ENCODE measurements at regions of chr11 and their contacts with region 1.

Region 1: GRCh38 chr11:65314501-65315203 is at the start of gene CDC42EP2:
- DNase-seq: peak; percentile 74
- H3K4me3 ChIP-seq: peak within 1 kb of the TSS; percentile 74
- H3K27ac ChIP-seq: no peak within 1 kb of the TSS
- H3K4me1 ChIP-seq: peaks cover 9% of the 10 kb centered on the region
- CTCF ChIP-seq: no peak
- total RNA-seq, gene CDC42EP2: not detected in 2 replicates

Region 2: GRCh38 chr11:65117216-65118096 is 197.2 kb before region 1 on chr11 and contains the start of gene ZNHIT2:
- CTCF ChIA-PET with region 1: no interaction called
- POLR2A ChIA-PET with region 1: no interaction called
- intact Hi-C with region 1: no loop called
- DNase-seq: peak; percentile 100
- H3K4me3 ChIP-seq: peak within 1 kb of the TSS; percentile 81
- H3K27ac ChIP-seq: peak within 1 kb of the TSS; percentile 78
- H3K4me1 ChIP-seq: peaks cover 62% of the 10 kb centered on the region
- CTCF ChIP-seq: peak; percentile 92
- total RNA-seq, gene ZNHIT2: 29.9 and 32.4 TPM in 2 replicates

Region 3: GRCh38 chr11:65225279-65226102 is 89.2 kb before region 1 on chr11:
- CTCF ChIA-PET with region 1: no interaction called
- POLR2A ChIA-PET with region 1: no interaction called
- intact Hi-C with region 1: loop called (anchors 10 kb)
- DNase-seq: peak; percentile 67
- H3K4me3 ChIP-seq: peak overlapping the region; percentile 63
- H3K27ac ChIP-seq: no peak overlapping the region
- H3K4me1 ChIP-seq: peaks cover 16% of the 10 kb centered on the region
- CTCF ChIP-seq: peak; percentile 83

Region 4: DNA sequence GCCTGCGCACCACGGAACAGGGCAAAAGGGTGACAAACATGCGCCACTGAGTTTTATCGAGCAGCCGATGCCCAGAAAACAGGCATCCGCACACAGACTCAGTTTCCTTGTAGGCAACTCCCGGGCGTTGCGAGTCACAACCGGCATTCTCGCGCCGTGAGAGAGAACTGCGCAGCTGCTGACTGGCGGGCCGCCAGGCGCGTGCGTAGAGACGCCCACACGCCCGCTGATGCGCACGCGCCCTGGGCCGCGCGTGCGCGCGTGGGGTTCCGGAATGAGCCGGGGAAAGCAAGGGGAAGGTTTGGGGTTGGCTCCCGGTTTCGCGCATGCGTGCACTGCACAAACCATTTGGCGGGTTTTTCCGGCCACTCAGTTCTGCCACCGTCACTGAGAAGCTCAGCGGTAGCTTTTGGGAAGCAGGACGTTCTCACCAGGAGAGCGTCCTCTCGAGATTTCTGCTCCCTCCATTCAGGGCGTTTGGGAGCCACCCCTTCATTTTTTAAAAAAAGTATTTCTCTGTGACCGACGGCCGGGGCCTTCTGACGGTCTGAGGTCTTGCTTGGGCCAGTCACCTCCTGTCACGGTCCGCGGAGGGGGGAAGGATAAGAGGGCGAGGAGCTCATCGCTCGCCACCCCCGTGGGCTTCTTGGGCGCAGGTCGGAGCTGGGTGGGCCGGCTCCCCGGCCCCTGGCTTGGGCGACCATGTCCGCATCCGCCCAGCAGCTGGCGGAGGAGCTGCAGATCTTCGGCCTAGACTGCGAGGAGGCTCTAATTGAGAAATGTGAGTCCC is 52.9 kb before region 1 on chr11 and contains the start of gene POLA2:
- CTCF ChIA-PET with region 1: no interaction called
- POLR2A ChIA-PET with region 1: no interaction called
- intact Hi-C with region 1: loop called (anchors 2 kb)
- DNase-seq: peak; percentile 98
- H3K4me3 ChIP-seq: peak within 1 kb of the TSS; percentile 78
- H3K27ac ChIP-seq: peak within 1 kb of the TSS; percentile 70
- H3K4me1 ChIP-seq: peaks cover 25% of the 10 kb centered on the region
- CTCF ChIP-seq: no peak
- total RNA-seq, gene POLA2: 47.5 and 50.0 TPM in 2 replicates